ENCODE measurements at regions of chr3 and their contacts with region 1.

Region 1: GRCh38 chr3:197906023-197906849 is 43.8 kb upstream of the RPL35A start:
- DNase-seq: peak; percentile 90

Region 2: DNA sequence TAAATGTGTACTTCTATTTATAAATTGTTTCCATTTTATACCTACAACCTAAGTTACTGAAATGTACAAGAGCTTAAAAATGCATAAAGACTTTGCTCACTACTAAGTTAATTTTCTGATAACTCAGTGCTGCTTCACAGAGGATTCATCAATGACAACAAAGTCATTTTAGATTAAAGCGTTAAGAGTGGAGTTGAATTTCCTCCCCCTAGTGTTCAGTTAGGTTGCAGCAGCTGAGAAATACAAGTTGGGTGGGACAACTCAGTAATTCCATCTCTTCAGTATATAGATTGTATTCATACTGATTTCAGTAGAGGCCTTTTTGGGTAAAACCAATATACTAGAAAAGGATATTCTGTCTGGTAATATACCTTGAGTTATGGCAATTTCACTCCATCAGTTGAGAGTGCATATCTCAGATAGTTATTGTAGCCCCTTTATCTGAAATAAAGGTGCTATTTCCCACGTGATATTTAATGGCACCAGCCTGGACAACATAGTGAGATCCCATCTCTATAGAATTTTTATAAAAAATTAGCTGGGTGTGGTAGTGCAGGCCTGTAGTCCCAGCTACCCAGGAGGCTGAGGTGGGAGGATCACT is 36.8 kb after region 1 on chr3:
- intact Hi-C with region 1: loop called (anchors 1 kb)
- DNase-seq: no peak

Region 3: DNA sequence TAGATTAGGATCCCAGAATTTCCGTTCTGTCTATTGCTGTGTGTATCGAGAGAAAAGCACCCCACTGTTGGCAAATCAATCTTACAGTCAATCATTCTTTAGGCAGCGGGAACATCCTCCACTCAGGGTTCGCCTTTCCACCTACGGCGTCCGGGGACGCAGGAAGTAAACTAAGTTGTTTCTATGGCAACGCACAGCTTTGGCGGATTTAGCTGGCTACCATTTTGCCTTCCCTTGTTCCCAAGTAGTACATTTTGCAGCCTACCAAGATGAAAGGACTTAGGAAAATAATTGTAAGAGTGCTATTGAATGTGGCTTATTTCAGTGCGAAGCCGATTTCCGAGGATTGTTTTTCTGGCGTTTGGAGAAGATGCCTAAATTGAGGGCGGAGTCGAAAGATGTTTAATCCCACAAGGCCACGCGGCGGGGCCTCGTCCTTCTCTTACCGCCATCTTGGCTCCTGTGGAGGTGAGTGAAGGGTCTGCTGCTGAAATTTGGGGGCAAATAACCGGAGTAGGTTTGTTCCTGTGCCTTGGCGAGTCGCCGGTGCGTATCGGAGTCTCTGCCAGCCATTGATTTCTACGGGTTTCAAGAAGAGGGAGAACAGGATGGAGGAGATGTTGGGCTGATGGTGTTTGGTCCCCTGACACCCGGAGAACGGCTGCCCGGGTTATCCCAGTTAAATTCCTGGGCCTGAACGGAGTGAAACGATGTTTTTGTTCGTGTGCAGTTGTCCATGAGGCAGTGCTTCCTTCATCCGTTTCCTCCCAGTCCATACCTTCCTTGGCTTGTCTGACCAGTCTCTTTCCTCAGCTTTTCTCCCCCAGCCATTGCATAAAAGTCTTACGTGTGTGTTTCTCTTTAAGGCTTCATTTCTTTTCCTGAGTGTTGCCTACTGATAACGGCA is 43.8 kb after region 1 on chr3 and contains the start of gene RPL35A:
- intact Hi-C with region 1: loop called (anchors 2 kb)
- DNase-seq: peak; percentile 92
- total RNA-seq, gene RPL35A: 563 TPM